Posterior cingulate gyrus (tissue), 11 donors: ENCODE measurements at regions of chr13 and their contacts with region 1.

Region 1: GRCh38 chr13:31044377-31045285 is 112.2 kb downstream of the TEX26 start:
- DNase-seq: peak; percentile 75 to 97 (median 82)

Region 2: GRCh38 chr13:30865123-30866049 is 179.2 kb before region 1 on chr13:
- intact Hi-C with region 1: loop called (anchors 10 kb)
- DNase-seq: peak; percentile 61 to 97 (median 80)

Region 3: DNA sequence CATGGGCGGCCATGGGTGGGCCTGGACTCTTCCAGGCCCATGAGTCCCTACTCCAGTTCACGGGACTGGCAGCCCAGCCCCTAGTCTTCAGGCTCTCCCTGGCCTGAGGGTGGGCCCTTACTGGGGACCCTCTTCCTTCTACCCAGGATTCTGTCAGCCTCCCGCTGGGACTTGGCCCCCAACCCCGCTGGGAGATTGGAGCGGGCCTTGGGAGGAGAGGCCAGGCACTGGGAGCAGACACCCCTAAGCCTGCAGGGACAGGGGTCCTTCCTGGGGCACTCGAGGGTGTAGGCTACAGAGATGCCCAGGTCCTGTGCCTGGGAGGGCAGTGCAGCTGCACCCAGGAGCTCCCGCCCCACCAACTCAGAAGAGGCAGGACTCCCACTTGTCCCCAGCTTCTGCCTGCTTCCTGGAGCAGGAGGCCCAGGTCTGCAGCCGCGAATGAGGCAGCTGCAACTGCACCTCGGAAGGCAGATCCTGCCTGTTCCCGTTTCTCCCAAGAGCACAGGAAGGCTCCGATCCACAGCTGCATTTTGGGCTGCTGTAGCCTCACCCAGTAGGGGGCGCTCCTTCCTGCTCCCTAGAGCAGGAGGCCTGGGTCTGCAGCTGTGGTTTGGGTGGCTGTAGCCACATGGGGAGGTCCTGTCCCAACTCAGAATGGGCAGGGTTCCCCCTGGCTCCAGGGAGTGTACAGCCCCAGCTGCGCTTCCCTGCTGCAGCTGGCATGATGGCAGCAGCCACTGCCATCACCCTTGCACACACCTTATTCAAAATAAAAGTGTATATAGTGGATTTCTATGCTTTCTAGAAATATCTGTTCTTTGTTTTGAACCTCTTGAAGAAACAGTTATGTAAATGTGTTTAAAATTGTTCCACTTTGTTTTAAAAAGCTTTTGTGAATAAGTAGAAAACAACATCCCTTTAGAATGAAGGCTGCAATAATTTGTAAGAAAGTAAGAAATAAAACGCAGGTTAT is 65.4 kb before region 1 on chr13:
- intact Hi-C with region 1: loop called (anchors 2 kb)
- DNase-seq: peak in 3 of 10 donors; percentile 32 to 85 (median 44)

Region 4: GRCh38 chr13:31138515-31138914 is 93.9 kb after region 1 on chr13:
- intact Hi-C with region 1: no loop called
- DNase-seq: no peak